Naive thymus-derived CD8-positive, alpha-beta T cell (primary cell): ENCODE measurements at regions of chr17 and their contacts with region 1.

Region 1: DNA sequence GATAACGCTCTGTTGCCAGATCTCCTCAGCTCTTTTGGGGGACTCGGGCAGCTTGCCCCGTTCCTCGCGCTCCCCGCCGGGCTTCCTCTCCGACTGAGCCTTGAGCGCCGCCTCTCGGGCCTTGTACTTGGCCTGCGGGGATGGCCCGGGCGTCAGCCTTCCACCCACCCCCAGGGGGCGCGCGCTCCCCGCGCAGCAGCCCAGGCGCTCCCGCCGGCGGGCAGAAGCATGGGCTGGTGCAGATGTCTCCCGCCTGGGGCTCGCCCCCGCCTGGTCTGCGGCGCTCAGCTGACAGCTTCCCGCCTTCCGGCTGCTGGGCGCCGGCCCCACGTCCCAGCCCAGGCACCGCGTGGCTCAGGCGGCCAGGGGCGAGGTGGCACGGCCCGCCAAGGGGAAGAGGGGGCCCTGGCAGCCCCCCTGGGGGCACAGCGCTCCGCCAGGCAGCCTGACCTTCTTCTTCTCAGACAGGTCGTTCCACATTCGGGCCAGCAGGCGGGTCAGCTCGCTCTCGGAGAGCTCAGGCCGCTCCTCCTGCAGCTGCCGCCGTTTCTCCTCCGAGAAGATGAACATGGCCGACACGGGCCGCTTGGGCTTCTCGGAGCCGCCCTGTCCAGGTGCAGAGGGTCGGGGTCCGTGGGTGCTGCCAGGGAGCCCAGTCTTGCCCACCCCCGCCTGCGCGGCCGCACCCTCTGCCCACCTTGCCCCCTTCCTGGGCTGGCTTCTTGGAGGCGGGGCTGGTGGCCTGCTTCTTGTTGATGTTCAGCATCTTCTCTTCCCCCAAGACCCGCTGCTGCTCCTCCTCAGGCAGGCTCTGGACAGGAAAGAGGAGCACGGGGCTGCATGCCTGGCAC is 8.9 kb downstream of the UBTF start:
- DNase-seq: peak; percentile 86 to 98 (median 93)
- ATAC-seq: peak; percentile 95 to 96
- H3K4me3 Mint-ChIP-seq: peak overlapping the region in 9 of 10 donors; percentile 15 to 79 (median 55)
- H3K27ac Mint-ChIP-seq: peak overlapping the region; percentile 63 to 93 (median 86)
- H3K4me1 Mint-ChIP-seq: peaks cover 35 to 77% (median 64%) of the 10 kb centered on the region in 4 donors
- H3K27me3 Mint-ChIP-seq: no peaks in the 10 kb centered on the region

Region 2: DNA sequence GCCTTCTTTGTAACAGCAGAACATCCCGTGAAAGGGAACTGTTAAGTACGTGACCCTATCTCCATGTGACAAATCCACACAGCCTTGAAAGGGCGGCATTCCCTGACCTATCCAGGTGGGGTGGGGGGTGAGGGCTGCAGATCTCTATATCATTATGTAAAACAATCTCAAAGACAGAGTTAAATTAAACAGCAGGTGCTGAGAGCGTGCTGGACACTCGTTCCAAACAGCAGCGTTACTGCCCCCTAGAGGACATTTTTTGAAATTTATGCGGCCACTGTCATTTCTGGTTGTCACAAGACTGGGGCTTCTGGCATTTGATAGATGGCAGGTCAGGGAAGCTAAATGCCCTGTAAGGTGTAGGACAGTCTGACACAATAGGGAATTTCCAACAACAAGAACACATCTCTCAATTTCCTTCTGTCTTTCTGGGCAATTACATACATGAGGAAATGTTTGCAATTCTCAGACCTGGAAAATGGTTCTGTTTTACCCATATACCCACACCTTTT is 120.7 kb after region 1 on chr17:
- POLR2A ChIA-PET with region 1: interaction called, 445 read pairs
- DNase-seq: peak in 9 of 10 donors; percentile 56 to 86 (median 74)
- ATAC-seq: peak; percentile 27 to 46
- H3K4me3 Mint-ChIP-seq: no peak overlapping the region
- H3K27ac Mint-ChIP-seq: peak overlapping the region in 4 of 10 donors; percentile 29 to 69 (median 42)
- H3K4me1 Mint-ChIP-seq: peaks cover 7 to 17% (median 12%) of the 10 kb centered on the region in 4 donors
- H3K27me3 Mint-ChIP-seq: no peaks in the 10 kb centered on the region